HAP-1 (cell line): ENCODE measurements at regions of chr3 and their contacts with region 1.

Region 1: DNA sequence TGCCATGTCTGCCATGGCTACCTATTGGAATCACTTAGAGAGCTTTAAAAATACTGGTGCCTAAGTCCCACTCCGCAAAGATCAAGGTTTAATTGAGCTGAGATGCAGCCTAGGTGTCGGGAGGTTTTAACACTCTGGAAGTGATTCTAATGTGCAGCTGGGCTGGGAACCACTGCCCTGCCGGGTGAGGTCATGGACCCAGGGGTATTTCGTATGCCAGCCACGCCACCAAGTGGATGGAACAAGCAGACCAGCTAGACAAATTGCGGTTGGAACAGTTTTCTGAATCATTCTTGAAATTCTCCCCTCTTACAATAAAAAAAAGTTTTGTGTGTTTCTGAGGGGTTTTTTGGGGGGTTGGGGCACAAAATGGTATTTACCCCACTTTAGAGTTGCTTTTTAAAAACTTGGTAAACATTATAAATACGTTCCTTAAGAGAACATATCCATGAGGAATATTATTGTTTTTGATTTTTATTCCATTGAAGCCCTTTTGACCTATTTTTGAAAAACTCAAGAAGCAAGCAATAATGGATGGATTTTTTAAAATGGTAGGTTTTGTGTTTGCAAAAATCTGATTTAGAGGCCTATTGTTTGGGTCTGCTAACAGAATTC is 66.2 kb upstream of the CSTA start:
- DNase-seq: peak; percentile 14 to 64
- H3K4me3 ChIP-seq: no peak overlapping the region
- H3K4me1 ChIP-seq: no peaks in the 10 kb centered on the region
- H3K27me3 ChIP-seq: peaks cover 3% of the 10 kb centered on the region

Region 2: DNA sequence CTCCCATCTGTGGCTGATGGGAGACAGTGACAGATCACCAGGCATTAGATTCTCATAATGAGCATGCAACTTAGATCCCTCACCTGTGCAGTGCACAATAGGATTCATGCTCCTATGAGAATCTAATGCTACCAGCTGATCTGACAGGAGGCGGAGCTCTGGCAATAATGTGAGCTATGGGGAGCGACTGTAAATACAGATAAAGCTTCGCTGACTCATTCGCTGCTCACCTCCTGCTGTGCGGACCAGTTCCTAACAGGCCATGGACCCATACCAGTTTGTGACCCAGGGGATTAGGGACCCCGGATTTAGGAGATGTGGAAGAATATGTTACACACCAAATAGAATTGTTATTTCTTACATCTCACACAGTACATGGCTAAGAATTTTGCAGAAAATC is 684.4 kb before region 1 on chr3:
- in situ Hi-C with region 1: loop called (anchors 25 kb)
- DNase-seq: no peak
- H3K4me3 ChIP-seq: no peak overlapping the region
- H3K4me1 ChIP-seq: no peaks in the 10 kb centered on the region
- H3K27me3 ChIP-seq: no peaks in the 10 kb centered on the region

Region 3: GRCh38 chr3:123229145-123229544 is 970.3 kb after region 1 on chr3:
- in situ Hi-C with region 1: no loop called
- DNase-seq: no peak
- H3K4me3 ChIP-seq: no peak overlapping the region
- H3K4me1 ChIP-seq: no peaks in the 10 kb centered on the region
- H3K27me3 ChIP-seq: no peaks in the 10 kb centered on the region